Mammary epithelial cell (primary cell): ENCODE measurements at regions of chr5 and their contacts with region 1.

Region 1: GRCh38 chr5:66987949-66988838 is 208.4 kb downstream of the CD180 start:
- DNase-seq: no peak
- H3K4me3 ChIP-seq: no peak overlapping the region
- H3K27ac ChIP-seq: peak overlapping the region; percentile 81
- H3K4me1 ChIP-seq: peaks cover 35% of the 10 kb centered on the region
- H3K27me3 ChIP-seq: no peaks in the 10 kb centered on the region
- CTCF ChIP-seq: peak; percentile 75 to 76

Region 2: DNA sequence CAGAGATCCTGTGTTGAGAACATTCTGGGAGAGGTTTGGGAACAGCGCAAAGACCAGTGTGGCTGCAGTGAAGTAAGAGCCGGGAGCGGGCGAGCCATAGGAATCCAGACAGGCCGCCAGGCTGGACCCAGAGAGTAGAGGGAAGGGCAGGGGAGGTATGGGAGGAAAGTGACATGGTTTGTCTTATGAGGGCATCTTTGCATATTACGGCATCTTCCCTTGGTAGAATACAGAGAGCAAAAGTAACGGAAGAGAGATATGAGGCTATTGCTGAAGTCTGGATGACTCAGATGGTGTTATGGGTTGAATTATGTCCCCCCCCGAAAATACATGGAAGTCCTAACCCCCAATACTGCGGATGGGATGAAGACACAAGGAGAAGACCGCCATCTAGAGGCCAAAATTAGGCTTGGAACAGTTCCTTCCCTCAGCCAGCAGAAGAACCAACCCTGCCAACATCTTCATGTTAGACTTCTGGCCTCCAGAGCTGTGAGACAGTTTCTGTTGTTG is 123.8 kb before region 1 on chr5:
- CTCF ChIA-PET with region 1: no interaction called
- dilution Hi-C with region 1: no loop called
- in situ Hi-C with region 1: no loop called
- intact Hi-C with region 1: loop called (anchors 5 kb)
- DNase-seq: peak; percentile 65
- H3K4me3 ChIP-seq: no peak overlapping the region
- H3K27ac ChIP-seq: no peak overlapping the region
- H3K4me1 ChIP-seq: peaks cover 11% of the 10 kb centered on the region
- H3K27me3 ChIP-seq: no peaks in the 10 kb centered on the region
- CTCF ChIP-seq: peak; percentile 60 to 73

Region 3: GRCh38 chr5:67095346-67096171 is 107.4 kb after region 1 on chr5:
- CTCF ChIA-PET with region 1: no interaction called
- dilution Hi-C with region 1: no loop called
- in situ Hi-C with region 1: no loop called
- intact Hi-C with region 1: loop called (anchors 2 kb)
- DNase-seq: peak; percentile 35
- H3K4me3 ChIP-seq: no peak overlapping the region
- H3K27ac ChIP-seq: peak overlapping the region; percentile 80
- H3K4me1 ChIP-seq: peaks cover 32% of the 10 kb centered on the region
- H3K27me3 ChIP-seq: no peaks in the 10 kb centered on the region
- CTCF ChIP-seq: no peak